ENCODE measurements at regions of chr1 and their contacts with region 1.

Region 1: GRCh38 chr1:3283849-3284248 is 170.6 kb upstream of the ARHGEF16 start:
- DNase-seq: peak in 1 of 3 donors; percentile 41
- ATAC-seq: peak; percentile 58 to 78 (median 70)
- H3K4me3 ChIP-seq: no peak overlapping the region
- H3K27ac ChIP-seq: no peak overlapping the region
- H3K4me1 ChIP-seq: no peaks in the 10 kb centered on the region
- H3K27me3 ChIP-seq: no peaks in the 10 kb centered on the region
- CTCF ChIP-seq: peak; percentile 42 to 73 (median 64)
- POLR2A ChIP-seq: no peak

Region 2: DNA sequence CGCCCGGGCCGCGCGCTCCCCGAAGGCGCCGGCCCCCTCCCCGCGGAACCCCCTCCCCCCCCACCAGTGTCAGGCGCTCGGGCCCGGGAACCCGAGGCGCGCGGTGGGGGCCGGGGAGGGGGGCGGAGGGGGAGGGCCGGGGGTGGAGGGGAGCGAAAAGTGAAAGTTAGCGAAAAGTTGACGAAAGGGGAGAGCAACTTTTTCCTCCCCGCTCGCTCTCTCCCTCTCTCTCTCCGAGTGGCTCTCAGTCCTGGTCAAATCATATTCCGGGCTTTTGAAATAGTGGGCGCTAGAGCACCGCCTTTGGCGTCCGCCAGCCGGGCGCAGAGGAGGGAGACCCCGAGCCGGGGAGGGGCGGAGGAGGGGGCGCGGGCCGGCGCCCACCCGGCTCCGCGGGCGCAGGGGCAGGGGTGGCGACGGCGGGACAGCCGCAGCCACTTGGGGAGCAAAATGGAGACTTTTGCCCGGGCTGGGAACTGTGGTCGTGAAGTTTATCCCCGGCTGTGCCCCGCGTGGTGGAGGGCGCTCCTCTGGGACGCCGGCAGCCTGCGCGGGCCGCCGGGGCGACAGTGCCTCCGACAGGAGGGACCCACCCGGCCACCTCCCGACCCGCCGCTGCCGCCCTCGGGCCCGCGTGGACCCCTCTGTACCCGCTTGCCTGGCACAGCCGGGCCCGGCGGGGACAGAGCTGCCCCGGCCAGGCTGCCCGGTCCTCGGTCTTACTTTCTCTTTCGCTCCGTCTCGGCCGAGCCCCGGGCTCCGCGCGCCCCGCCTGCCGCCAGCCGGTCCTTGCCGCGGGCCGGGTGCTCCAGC is 214.2 kb before region 1 on chr1:
- intact Hi-C with region 1: loop called in 1 of 2 experiments (anchors 5 kb)
- DNase-seq: peak in 2 of 3 donors; percentile 43 to 51
- ATAC-seq: peak; percentile 53 to 67 (median 62)
- H3K4me3 ChIP-seq: peak overlapping the region; percentile 62 to 65 (median 63)
- H3K27ac ChIP-seq: no peak overlapping the region
- H3K4me1 ChIP-seq: peaks cover 0 to 13% (median 0%) of the 10 kb centered on the region in 4 donors
- H3K27me3 ChIP-seq: peaks cover 0 to 27% of the 10 kb centered on the region in 2 donors
- CTCF ChIP-seq: peak in 3 of 4 donors; percentile 36 to 38 (median 38)
- POLR2A ChIP-seq: no peak

Region 3: GRCh38 chr1:3577300-3577699 is 293.5 kb after region 1 on chr1:
- intact Hi-C with region 1: no loop called
- DNase-seq: no peak
- ATAC-seq: no peak
- H3K4me3 ChIP-seq: no peak overlapping the region
- H3K27ac ChIP-seq: no peak overlapping the region
- H3K4me1 ChIP-seq: no peaks in the 10 kb centered on the region
- H3K27me3 ChIP-seq: no peaks in the 10 kb centered on the region
- CTCF ChIP-seq: no peak
- POLR2A ChIP-seq: no peak